PC-9 (cell line): ENCODE measurements at regions of chr3 and their contacts with region 1.

Region 1: GRCh38 chr3:123723522-123724168 is 138.8 kb upstream of the HACD2 start:
- DNase-seq: peak; percentile 46 to 56
- H3K4me3 ChIP-seq: no peak overlapping the region
- H3K27ac ChIP-seq: no peak overlapping the region
- H3K4me1 ChIP-seq: no peaks in the 10 kb centered on the region
- H3K27me3 ChIP-seq: no peaks in the 10 kb centered on the region
- CTCF ChIP-seq: peak; percentile 86

Region 2: GRCh38 chr3:123328851-123329635 is 394.6 kb before region 1 on chr3:
- CTCF ChIA-PET with region 1: no interaction called
- POLR2A ChIA-PET with region 1: no interaction called
- intact Hi-C with region 1: loop called (anchors 10 kb)
- DNase-seq: peak; percentile 42 to 80
- H3K4me3 ChIP-seq: no peak overlapping the region
- H3K27ac ChIP-seq: no peak overlapping the region
- H3K4me1 ChIP-seq: no peaks in the 10 kb centered on the region
- H3K27me3 ChIP-seq: no peaks in the 10 kb centered on the region
- CTCF ChIP-seq: peak; percentile 91

Region 3: GRCh38 chr3:123552095-123552714 is 171.4 kb before region 1 on chr3:
- CTCF ChIA-PET with region 1: no interaction called
- POLR2A ChIA-PET with region 1: no interaction called
- intact Hi-C with region 1: no loop called
- DNase-seq: no peak
- H3K4me3 ChIP-seq: no peak overlapping the region
- H3K27ac ChIP-seq: no peak overlapping the region
- H3K4me1 ChIP-seq: no peaks in the 10 kb centered on the region
- H3K27me3 ChIP-seq: no peaks in the 10 kb centered on the region
- CTCF ChIP-seq: peak; percentile 65

Region 4: GRCh38 chr3:123568034-123568433 is 155.6 kb before region 1 on chr3:
- CTCF ChIA-PET with region 1: no interaction called
- POLR2A ChIA-PET with region 1: no interaction called
- intact Hi-C with region 1: loop called (anchors 5 kb)
- DNase-seq: no peak
- H3K4me3 ChIP-seq: no peak overlapping the region
- H3K27ac ChIP-seq: no peak overlapping the region
- H3K4me1 ChIP-seq: no peaks in the 10 kb centered on the region
- H3K27me3 ChIP-seq: no peaks in the 10 kb centered on the region
- CTCF ChIP-seq: no peak

Region 5: GRCh38 chr3:123652346-123652984 is 71.2 kb before region 1 on chr3:
- CTCF ChIA-PET with region 1: interaction called, 4 read pairs
- POLR2A ChIA-PET with region 1: no interaction called
- intact Hi-C with region 1: loop called (anchors 1 kb)
- DNase-seq: peak; percentile 51 to 81
- H3K4me3 ChIP-seq: no peak overlapping the region
- H3K27ac ChIP-seq: no peak overlapping the region
- H3K4me1 ChIP-seq: no peaks in the 10 kb centered on the region; the same call in 1 of the 2 replicates
- H3K27me3 ChIP-seq: no peaks in the 10 kb centered on the region
- CTCF ChIP-seq: peak; percentile 92

Region 6: DNA sequence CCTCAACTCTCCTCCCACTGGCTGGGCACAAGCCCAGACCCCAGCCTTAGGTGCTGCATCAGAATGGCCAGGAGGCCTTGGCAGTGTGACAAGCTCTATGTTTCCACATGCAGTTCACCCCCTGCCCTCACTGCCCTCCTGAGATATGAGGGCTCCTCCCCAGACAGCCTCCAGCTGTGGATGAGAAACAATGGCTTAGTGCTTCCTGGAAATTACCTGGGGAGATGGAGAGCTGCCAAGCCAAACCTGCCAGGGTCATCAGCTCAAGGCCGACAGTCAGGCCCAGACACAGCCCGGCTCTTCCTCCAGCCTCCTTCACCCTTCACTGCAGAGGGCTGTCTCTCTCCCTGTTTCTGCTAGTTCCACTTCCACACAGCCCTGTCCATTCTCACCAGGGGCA is 84.2 kb after region 1 on chr3:
- CTCF ChIA-PET with region 1: no interaction called
- POLR2A ChIA-PET with region 1: no interaction called
- intact Hi-C with region 1: loop called (anchors 5 kb)
- DNase-seq: peak in 1 of 2 experiments; percentile 67
- H3K4me3 ChIP-seq: no peak overlapping the region
- H3K27ac ChIP-seq: no peak overlapping the region
- H3K4me1 ChIP-seq: peaks cover 13% of the 10 kb centered on the region
- H3K27me3 ChIP-seq: no peaks in the 10 kb centered on the region
- CTCF ChIP-seq: no peak

Region 7: DNA sequence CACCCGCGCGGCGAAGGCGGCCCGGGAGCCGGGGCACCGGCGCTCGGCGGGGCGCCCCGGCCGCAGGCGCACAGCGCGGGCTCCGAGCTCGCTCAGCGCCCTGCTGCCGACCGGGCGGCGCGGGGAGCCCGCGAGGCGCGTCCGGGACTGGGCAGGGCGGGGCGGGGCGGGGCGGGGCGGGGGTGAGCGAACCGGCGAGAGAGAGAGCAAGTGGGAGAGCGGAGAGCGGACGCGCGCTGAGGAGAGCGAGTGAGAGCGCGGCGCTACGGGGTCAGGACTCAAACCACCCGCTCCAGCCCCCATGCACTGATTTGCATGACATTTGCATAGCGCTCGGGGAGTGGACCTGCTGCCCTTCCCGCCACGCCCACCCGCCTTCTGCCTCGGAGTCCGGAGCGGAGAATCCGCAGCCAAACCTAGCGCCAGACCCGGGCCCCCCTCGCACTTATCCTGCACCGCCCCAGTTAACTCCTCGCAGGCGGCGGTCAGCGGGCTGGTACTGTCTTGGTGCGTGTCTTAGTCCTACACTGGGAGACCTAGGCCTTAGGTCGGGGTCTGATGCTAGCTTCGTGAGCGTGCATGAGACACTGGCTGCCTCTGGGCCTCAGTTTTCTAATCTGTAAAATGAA is 160.7 kb after region 1 on chr3 and contains the start of gene MYLK:
- CTCF ChIA-PET with region 1: no interaction called
- POLR2A ChIA-PET with region 1: no interaction called
- intact Hi-C with region 1: loop called (anchors 5 kb)
- DNase-seq: peak in 1 of 2 experiments; percentile 23
- H3K4me3 ChIP-seq: no peak within 1 kb of the TSS
- H3K27ac ChIP-seq: no peak within 1 kb of the TSS
- H3K4me1 ChIP-seq: no peaks in the 10 kb centered on the region
- H3K27me3 ChIP-seq: no peaks in the 10 kb centered on the region
- CTCF ChIP-seq: no peak
- total RNA-seq, gene MYLK: 0.72 and 1.2 TPM in 2 replicates

Region 8: DNA sequence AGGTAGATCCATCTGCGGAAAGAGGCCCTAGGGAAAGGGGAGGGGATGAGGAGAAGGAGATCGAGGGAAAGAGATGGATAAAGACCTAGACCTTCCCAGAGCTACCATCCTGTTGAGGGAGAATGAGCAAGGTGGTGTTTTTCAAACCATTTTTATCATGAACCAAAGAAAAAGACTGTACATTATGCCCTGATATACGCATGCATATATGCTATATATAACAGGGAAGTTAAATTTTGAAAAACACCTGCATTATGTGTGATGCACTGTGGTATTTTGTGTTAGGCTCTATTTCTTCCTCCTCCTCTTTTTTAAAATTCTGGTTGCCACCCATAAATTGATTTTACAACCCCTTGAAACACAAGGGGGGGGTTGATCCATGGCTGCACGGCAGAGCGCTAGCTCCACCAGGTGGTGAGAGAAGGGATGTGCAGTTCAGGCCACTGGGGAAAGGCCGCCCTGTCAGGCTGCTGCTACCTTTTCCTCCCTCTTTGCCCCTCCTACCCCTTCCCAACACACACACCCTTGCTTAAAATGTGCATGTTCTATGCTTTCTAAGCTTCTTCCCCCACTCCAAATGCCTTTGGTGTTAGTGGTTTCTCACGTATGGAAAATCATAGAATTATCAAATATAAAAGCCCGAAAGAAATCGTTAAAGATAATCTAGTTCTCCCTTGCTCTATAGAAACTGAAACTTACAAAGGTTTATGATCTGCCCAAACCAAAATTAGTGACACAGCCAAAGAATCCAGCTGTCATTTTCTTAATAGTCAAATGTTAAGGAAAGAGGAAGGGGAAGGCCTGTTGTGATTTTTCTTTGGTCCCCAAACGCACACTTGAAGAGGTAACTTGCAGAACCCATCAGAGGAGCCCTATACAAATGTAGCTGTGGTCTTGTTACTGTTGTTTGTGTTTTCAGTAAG is 744.6 kb after region 1 on chr3:
- CTCF ChIA-PET with region 1: interaction called, 21 read pairs
- POLR2A ChIA-PET with region 1: no interaction called
- intact Hi-C with region 1: no loop called
- DNase-seq: peak in 1 of 2 experiments; percentile 49
- H3K4me3 ChIP-seq: no peak overlapping the region
- H3K27ac ChIP-seq: no peak overlapping the region
- H3K4me1 ChIP-seq: no peaks in the 10 kb centered on the region
- H3K27me3 ChIP-seq: peaks cover 61% of the 10 kb centered on the region
- CTCF ChIP-seq: peak; percentile 92